BJ (cell line): ENCODE measurements at regions of chr2 and their contacts with region 1.

Region 1: DNA sequence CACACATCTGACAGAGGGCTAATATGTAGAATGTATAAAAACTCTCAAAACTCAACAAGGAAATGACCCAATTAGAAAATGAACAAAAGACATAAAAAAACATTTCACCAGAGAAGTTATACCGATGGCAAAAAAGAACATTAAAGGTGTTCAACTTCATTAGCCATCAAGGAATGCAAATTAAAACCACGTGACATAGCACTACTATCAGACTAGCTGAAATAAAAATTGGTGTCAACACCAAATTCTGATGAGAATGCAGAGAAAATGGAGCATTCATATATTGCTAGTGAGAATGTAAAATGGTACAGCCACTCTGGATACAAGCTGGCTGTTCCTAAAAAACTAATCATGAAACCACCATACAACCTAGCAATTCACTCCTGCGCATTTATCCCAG is 128.0 kb downstream of the INSIG2 start:
- DNase-seq: no peak
- H3K4me3 ChIP-seq: no peak overlapping the region
- H3K27me3 ChIP-seq: no peaks in the 10 kb centered on the region; the same call in 1 of the 2 replicates
- CTCF ChIP-seq: no peak

Region 2: DNA sequence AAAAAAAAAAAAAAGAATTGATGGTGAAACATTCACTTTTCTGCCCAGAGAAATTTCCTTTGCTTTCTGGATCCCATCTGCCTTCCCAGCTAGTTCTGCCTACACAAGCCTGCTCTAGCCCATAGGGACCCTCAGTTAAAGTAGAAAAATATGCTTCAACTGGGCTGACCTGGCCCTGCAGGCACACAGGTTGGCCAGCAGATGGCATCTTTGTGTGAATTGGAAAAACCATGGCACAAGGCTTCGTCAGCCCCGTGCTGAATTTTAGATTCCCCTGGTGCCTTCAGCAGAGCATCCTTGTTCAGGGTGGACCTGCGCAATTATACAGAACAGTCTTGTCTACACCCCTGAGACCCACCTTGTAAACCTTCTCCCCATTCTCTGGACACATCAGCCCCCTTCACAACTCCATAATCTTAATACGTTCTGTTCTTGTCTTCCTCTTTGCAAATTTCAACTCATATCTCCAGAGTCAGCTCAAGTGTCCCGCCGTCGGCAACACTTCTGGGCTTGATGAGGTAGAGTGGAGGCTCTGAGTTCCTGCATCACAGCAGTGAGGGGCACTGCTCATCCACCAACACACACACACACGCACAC is 13.4 kb before region 1 on chr2:
- CTCF ChIA-PET with region 1: interaction called, 11 read pairs
- POLR2A ChIA-PET with region 1: no interaction called
- DNase-seq: no peak
- H3K4me3 ChIP-seq: no peak overlapping the region
- H3K27me3 ChIP-seq: peaks cover 2% of the 10 kb centered on the region
- CTCF ChIP-seq: peak; percentile 92

Region 3: GRCh38 chr2:118350621-118351020 is 134.4 kb after region 1 on chr2:
- CTCF ChIA-PET with region 1: no interaction called
- POLR2A ChIA-PET with region 1: no interaction called
- DNase-seq: no peak
- H3K4me3 ChIP-seq: no peak overlapping the region
- H3K27me3 ChIP-seq: peaks cover 3% of the 10 kb centered on the region; the same call in 1 of the 2 replicates
- CTCF ChIP-seq: no peak